ENCODE measurements at regions of chr12 and their contacts with region 1.

Region 1: GRCh38 chr12:48157018-48157888 is at the start of gene ASB8:
- DNase-seq: peak; percentile 98 to 100 (median 99)

Region 2: GRCh38 chr12:47990351-47991105 is 166.7 kb before region 1 on chr12:
- intact Hi-C with region 1: no loop called
- DNase-seq: peak in 1 of 10 donors; percentile 30

Region 3: DNA sequence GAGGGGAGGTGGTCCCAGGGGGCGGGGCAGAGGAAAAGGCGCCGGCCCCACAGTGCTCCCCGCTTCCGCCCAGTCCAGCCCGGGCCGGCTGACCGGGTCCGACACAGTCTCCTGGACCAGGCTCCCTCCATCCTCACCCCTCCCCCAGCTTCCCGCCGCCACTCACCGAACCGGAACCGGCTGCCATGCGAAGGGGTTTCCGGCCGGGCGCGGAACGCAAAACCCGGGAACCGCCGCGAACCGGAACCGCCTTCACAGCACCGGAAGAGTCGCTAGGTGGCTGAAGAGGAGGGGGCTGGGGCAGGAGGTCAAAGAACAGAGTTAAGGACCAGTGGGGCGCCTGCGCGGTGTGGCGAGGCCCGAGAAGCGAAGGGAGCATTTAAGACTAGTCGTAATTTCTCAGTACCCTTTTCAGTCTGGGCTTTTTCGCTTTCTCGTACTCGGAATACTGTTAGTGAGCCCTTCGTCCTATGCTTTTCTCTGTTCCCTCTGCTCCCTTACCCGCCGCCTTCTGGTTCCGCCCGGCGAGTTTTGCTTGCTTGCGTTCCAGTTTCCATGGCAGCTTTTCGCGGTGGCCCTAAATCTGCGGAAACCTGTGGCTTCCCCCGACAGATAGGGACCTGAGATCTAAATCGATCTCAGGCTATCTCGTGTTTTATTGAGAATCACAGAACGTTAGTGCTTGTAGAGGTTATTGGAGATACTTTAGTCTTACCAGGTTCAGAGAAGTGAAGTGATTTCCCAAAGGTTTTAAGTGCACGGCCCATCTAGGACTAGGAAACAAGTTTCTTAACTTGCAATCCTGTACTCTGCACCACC is 51.2 kb before region 1 on chr12 and contains the start of gene SENP1:
- intact Hi-C with region 1: loop called (anchors 2 kb)
- DNase-seq: peak; percentile 87 to 98 (median 90)